Psoas muscle (tissue), 8 donors: ENCODE measurements at regions of chr1 and their contacts with region 1.

Region 1: DNA sequence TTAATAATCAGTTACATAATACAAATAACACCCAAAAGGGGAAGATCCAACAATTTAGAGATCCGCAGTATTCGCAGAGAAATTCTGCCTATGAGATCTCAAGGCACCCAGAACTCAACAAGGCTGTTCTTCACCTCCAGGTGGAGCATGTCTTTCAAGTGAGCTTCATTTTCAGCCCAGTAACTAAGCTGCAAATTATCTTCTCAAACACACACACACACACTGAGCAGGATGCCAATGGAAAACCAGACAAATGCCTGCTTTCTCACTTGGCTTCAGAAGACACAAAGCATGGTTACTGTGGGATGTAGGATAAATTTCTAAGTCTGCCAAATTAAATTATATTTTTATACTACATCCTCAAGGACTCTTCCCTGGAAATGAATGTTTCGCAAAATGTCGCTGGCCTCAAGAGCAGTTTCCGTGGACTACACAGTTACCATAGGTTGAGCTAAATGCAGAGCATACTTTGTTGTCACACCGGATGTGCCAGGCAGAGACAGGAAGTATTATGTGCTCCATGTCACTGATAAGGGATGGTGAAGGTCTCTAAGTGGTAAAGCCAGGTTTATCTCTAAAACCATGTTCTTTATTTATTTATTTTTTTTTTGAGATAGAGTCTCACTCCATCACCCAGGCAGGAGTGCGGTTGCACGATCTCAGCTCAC is 30.3 kb downstream of the UBR4 start:
- DNase-seq: no peak
- ATAC-seq: peak in 1 of 4 donors; percentile 64
- H3K4me3 ChIP-seq: no peak overlapping the region
- H3K27ac ChIP-seq: no peak overlapping the region
- H3K4me1 ChIP-seq: no peaks in the 10 kb centered on the region
- H3K27me3 ChIP-seq: no peaks in the 10 kb centered on the region
- CTCF ChIP-seq: no peak

Region 2: GRCh38 chr1:19139711-19140110 is 40.0 kb before region 1 on chr1:
- intact Hi-C with region 1: loop called in 1 of 2 experiments (anchors 5 kb)
- DNase-seq: no peak
- ATAC-seq: no peak
- H3K4me3 ChIP-seq: no peak overlapping the region
- H3K27ac ChIP-seq: no peak overlapping the region
- H3K4me1 ChIP-seq: no peaks in the 10 kb centered on the region
- H3K27me3 ChIP-seq: no peaks in the 10 kb centered on the region
- CTCF ChIP-seq: no peak

Region 3: DNA sequence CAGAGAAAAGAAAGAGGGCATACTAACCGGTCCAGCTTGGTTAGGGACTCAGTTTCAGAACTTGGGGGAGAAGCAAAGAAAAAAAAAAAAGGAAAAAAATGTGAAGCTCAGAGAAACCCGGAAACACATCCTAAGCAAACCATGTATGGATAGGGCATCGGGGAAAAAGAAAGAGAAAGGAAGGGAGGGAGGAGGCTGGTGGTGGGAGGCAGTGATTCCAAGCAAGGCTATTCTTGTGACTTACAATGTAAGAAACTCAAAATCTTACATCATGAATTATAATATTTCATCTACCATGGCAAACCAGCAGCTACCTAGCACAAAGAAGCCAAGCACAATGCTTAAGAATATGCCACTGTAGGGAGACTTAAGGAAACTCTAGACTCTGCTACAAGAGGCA is 30.0 kb before region 1 on chr1:
- intact Hi-C with region 1: loop called (anchors 5 kb)
- DNase-seq: no peak
- ATAC-seq: no peak
- H3K4me3 ChIP-seq: no peak overlapping the region
- H3K27ac ChIP-seq: no peak overlapping the region
- H3K4me1 ChIP-seq: no peaks in the 10 kb centered on the region
- H3K27me3 ChIP-seq: no peaks in the 10 kb centered on the region
- CTCF ChIP-seq: no peak

Region 4: DNA sequence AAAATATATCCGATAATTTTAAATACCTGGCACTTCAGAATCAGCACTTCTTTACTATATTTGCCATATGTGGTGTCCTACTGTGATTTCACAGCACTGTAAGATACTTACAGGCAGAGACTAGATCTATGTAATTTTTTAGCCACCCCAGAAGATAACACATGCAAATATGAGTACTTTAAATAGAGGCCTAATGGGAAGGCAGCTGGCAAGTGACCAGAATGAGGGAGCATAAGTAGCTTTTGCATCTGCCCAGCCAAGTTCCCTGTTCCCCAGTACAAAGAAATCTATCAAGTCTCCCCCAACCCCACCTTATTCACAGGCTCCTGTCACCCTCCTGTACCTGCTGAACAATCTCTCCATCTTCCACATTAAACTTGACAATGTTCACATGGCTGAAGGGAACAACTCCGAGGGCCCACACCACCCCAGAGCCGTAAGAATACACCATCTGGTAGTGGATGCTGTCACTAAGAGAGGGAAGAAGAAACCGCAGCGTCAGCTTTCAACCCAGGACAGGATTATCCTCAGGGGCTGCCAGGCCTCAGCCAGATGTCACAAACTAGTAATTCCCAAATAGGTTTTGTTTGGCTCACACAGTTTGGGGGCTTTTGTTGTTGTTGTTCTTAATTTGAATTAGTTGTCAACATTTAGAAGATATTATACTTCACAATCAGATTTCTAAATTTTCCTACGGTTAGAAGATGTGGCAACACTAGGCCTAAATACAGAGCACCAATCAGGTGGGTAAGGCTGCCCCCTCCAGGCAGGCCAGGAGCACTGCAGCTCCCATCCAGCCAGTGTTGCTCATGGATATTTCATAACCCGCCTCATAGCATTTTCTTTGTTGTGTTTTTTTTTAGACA is 61.2 kb after region 1 on chr1:
- intact Hi-C with region 1: loop called in 1 of 2 experiments (anchors 2 kb)
- DNase-seq: peak; percentile 68 to 87
- ATAC-seq: peak; percentile 89 to 95 (median 94)
- H3K4me3 ChIP-seq: peak overlapping the region; percentile 10
- H3K27ac ChIP-seq: peak overlapping the region; percentile 86
- H3K4me1 ChIP-seq: peaks cover 13% of the 10 kb centered on the region
- H3K27me3 ChIP-seq: no peaks in the 10 kb centered on the region
- CTCF ChIP-seq: peak; percentile 98